Mucosa of descending colon (tissue), 3 donors: ENCODE measurements at regions of chr10 and their contacts with region 1.

Region 1: GRCh38 chr10:132387764-132388210 is 9.2 kb upstream of the PWWP2B start:
- DNase-seq: peak; percentile 82 to 88 (median 86)
- ATAC-seq: peak; percentile 83
- H3K4me3 ChIP-seq: no peak overlapping the region
- H3K4me1 ChIP-seq: peaks cover 10% of the 10 kb centered on the region
- CTCF ChIP-seq: peak; percentile 58

Region 2: GRCh38 chr10:132452631-132453469 is 65.1 kb after region 1 on chr10:
- intact Hi-C with region 1: loop called (anchors 5 kb)
- DNase-seq: peak; percentile 96
- ATAC-seq: peak; percentile 80
- H3K4me3 ChIP-seq: no peak overlapping the region
- H3K4me1 ChIP-seq: peaks cover 48% of the 10 kb centered on the region
- CTCF ChIP-seq: peak; percentile 90

Region 3: DNA sequence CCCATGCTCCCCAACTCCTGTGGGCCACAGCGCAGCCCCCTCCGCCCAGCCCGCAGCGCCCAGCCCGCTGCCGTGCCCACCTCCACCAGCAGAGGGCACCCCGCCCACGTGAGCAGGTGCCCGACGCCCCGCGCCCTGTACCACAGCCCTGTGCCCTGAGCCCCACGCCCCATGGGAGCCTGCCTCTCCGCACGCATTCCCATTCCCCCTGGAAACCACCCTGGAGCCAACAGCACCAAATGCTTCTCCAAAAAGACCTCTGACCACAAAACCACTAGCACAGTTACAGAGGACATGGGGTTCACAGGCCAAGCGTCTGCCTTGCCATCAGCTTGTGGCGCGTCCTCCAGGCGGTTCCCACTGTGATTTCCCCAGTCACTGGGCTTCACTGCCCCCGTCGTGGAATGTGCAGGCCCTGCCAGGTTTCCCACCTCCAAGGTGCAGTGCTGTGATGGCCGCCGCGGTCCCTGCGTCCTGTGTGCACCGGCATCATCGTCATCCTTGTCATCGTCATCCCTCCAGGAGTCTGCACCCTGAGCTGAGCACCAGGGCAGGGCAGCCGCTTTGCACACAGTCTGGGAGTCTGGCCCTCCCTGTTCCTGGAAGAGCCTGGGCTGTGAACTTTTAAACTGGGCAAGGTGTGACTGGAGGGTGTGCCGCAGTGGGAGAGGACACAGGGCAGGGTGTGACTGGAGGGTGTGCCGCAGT is 71.0 kb after region 1 on chr10:
- intact Hi-C with region 1: loop called (anchors 5 kb)
- DNase-seq: peak; percentile 84 to 89 (median 87)
- ATAC-seq: peak; percentile 78
- H3K4me3 ChIP-seq: no peak overlapping the region
- H3K4me1 ChIP-seq: peaks cover 59% of the 10 kb centered on the region
- CTCF ChIP-seq: peak; percentile 97

Region 4: GRCh38 chr10:132536971-132537712 is 149.4 kb after region 1 on chr10:
- intact Hi-C with region 1: loop called in 1 of 2 experiments (anchors 10 kb)
- DNase-seq: peak; percentile 100
- ATAC-seq: peak; percentile 94
- H3K4me3 ChIP-seq: peak overlapping the region; percentile 38
- H3K4me1 ChIP-seq: peaks cover 31% of the 10 kb centered on the region
- CTCF ChIP-seq: peak; percentile 20

Region 5: GRCh38 chr10:132637477-132638129 is 249.8 kb after region 1 on chr10:
- intact Hi-C with region 1: loop called in 1 of 2 experiments (anchors 10 kb)
- DNase-seq: peak in 2 of 3 donors; percentile 20 to 40
- ATAC-seq: peak; percentile 54
- H3K4me3 ChIP-seq: no peak overlapping the region
- H3K4me1 ChIP-seq: peaks cover 16% of the 10 kb centered on the region
- CTCF ChIP-seq: peak; percentile 35